A673 (cell line): ENCODE measurements at regions of chr1 and their contacts with region 1.

Region 1: GRCh38 chr1:178031856-178032320 is 62.0 kb upstream of the RASAL2 start:
- DNase-seq: peak; percentile 94
- H3K4me3 ChIP-seq: no peak overlapping the region
- H3K27ac ChIP-seq: no peak overlapping the region
- H3K4me1 ChIP-seq: peaks cover 3% of the 10 kb centered on the region
- H3K27me3 ChIP-seq: no peaks in the 10 kb centered on the region
- CTCF ChIP-seq: peak; percentile 92

Region 2: GRCh38 chr1:177891809-177892208 is 140.1 kb before region 1 on chr1:
- CTCF ChIA-PET with region 1: no interaction called
- POLR2A ChIA-PET with region 1: no interaction called
- intact Hi-C with region 1: no loop called
- DNase-seq: no peak
- H3K4me3 ChIP-seq: no peak overlapping the region
- H3K27ac ChIP-seq: no peak overlapping the region
- H3K4me1 ChIP-seq: no peaks in the 10 kb centered on the region
- H3K27me3 ChIP-seq: no peaks in the 10 kb centered on the region
- CTCF ChIP-seq: no peak

Region 3: DNA sequence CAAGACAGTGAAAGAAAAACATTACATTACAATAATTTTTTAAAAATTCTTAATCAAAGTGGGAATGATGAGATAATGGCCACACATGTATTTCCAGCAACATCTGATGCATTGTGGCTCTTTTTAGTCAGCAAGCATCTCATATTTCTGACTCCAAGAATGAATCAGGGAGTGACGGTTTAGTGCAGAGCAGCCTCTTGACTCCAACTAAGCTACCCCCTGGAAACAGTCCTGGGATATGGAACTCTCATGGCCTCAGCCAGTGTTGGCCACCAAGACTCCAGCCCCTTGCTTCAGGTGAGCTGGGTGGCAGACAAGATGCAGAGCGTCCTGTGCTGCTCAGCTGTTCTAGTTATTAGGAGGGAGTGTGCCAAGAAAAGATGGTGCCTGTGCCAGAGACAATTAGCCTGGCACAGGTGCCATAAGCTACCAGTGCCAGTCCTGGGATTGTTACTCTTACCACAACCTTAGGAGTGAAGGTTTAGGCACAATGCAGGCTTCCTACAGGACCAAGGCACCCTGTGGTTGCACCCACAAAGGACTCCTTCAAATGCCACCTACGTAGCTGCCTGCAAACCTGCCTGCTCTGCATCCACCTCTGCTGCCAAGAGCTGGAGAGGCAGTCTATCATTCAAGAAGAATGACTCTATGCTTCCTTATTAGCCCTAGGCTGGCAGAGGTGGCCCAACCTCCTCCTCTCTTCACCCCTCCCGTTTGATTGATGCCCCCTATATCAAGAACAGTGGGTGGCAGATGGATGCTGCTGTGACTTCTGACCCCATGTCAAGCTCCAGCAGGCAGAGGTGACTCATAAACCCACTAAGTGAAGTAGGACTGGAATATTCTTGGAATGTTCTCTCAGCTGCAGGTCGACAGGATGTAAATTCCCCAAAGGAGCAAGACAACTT is 56.0 kb before region 1 on chr1:
- CTCF ChIA-PET with region 1: no interaction called
- POLR2A ChIA-PET with region 1: no interaction called
- intact Hi-C with region 1: no loop called
- DNase-seq: no peak
- H3K4me3 ChIP-seq: no peak overlapping the region
- H3K27ac ChIP-seq: no peak overlapping the region
- H3K4me1 ChIP-seq: no peaks in the 10 kb centered on the region
- H3K27me3 ChIP-seq: peaks cover 4% of the 10 kb centered on the region
- CTCF ChIP-seq: no peak

Region 4: GRCh38 chr1:178189814-178190213 is 157.9 kb after region 1 on chr1:
- CTCF ChIA-PET with region 1: interaction called, 8 read pairs
- POLR2A ChIA-PET with region 1: no interaction called
- intact Hi-C with region 1: loop called (anchors 2 kb)
- DNase-seq: peak; percentile 78
- H3K4me3 ChIP-seq: no peak overlapping the region
- H3K27ac ChIP-seq: no peak overlapping the region
- H3K4me1 ChIP-seq: no peaks in the 10 kb centered on the region
- H3K27me3 ChIP-seq: no peaks in the 10 kb centered on the region
- CTCF ChIP-seq: peak; percentile 74

Region 5: DNA sequence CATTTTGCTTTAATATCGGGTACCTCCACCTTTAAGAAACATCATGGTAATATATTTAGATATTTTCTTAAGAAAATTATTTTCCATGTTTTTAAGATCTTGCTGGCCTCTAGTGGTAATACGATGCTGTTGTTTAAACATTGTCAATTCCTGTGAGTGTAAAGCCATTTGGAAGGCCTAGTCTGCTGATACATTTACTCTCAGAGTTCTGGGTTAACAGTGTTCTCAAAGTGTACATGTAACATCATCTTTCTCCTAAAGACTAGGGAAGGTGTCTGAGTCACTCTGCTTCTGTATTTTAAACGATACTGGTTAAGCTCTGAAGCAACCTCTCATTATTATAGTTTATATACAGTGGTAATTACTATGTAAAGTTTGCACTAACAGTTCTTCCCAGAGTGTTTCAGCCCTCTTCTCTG is 251.1 kb after region 1 on chr1:
- CTCF ChIA-PET with region 1: interaction called, 7 read pairs
- POLR2A ChIA-PET with region 1: no interaction called
- intact Hi-C with region 1: loop called (anchors 1 kb)
- DNase-seq: peak; percentile 46
- H3K4me3 ChIP-seq: no peak overlapping the region
- H3K27ac ChIP-seq: no peak overlapping the region
- H3K4me1 ChIP-seq: no peaks in the 10 kb centered on the region
- H3K27me3 ChIP-seq: no peaks in the 10 kb centered on the region
- CTCF ChIP-seq: peak; percentile 58